ENCODE measurements at regions of chr12 and their contacts with region 1.

Region 1: GRCh38 chr12:92085040-92085735 is 60.5 kb downstream of the BTG1 start:
- DNase-seq: no peak
- ATAC-seq: peak; percentile 7; the same call in 1 of the 2 replicates
- H3K4me3 ChIP-seq: no peak overlapping the region
- H3K27ac ChIP-seq: peak overlapping the region; percentile 61
- H3K4me1 ChIP-seq: peaks cover 44% of the 10 kb centered on the region
- H3K27me3 ChIP-seq: no peaks in the 10 kb centered on the region
- CTCF ChIP-seq: no peak

Region 2: GRCh38 chr12:91811481-91812287 is 273.5 kb before region 1 on chr12:
- CTCF ChIA-PET with region 1: no interaction called
- POLR2A ChIA-PET with region 1: no interaction called
- intact Hi-C with region 1: loop called (anchors 10 kb)
- DNase-seq: peak; percentile 72
- ATAC-seq: peak; percentile 53
- H3K4me3 ChIP-seq: no peak overlapping the region
- H3K27ac ChIP-seq: no peak overlapping the region
- H3K4me1 ChIP-seq: no peaks in the 10 kb centered on the region
- H3K27me3 ChIP-seq: no peaks in the 10 kb centered on the region
- CTCF ChIP-seq: peak; percentile 93

Region 3: DNA sequence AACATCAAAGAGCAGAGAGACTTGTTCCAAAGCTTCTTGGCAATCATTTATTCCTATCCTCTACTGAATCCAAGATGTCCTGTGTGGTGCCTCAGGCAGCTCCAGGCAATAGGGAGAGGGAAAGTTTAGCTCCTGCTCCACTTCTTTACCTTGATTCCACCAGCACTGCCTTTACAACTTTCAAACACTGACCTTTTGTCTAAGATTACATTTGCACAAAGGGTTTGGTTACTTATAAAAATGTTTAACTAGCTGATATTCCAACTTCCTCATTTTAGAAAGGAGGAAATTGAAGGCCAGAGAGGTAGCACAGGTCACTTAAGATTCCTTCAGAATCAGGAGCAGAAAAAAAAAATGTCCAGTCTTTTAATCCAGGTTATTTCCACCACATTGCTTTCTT is 132.3 kb before region 1 on chr12:
- CTCF ChIA-PET with region 1: interaction called, 10 read pairs
- POLR2A ChIA-PET with region 1: no interaction called
- intact Hi-C with region 1: no loop called
- DNase-seq: peak; percentile 15
- ATAC-seq: peak; percentile 88
- H3K4me3 ChIP-seq: no peak overlapping the region
- H3K27ac ChIP-seq: no peak overlapping the region
- H3K4me1 ChIP-seq: peaks cover 3% of the 10 kb centered on the region; the same call in 1 of the 2 replicates
- H3K27me3 ChIP-seq: no peaks in the 10 kb centered on the region
- CTCF ChIP-seq: no peak

Measured in PC-3 (cell line).